Dorsolateral prefrontal cortex (tissue), 120 donors: ENCODE measurements at regions of chr13 and their contacts with region 1.

Region 1: DNA sequence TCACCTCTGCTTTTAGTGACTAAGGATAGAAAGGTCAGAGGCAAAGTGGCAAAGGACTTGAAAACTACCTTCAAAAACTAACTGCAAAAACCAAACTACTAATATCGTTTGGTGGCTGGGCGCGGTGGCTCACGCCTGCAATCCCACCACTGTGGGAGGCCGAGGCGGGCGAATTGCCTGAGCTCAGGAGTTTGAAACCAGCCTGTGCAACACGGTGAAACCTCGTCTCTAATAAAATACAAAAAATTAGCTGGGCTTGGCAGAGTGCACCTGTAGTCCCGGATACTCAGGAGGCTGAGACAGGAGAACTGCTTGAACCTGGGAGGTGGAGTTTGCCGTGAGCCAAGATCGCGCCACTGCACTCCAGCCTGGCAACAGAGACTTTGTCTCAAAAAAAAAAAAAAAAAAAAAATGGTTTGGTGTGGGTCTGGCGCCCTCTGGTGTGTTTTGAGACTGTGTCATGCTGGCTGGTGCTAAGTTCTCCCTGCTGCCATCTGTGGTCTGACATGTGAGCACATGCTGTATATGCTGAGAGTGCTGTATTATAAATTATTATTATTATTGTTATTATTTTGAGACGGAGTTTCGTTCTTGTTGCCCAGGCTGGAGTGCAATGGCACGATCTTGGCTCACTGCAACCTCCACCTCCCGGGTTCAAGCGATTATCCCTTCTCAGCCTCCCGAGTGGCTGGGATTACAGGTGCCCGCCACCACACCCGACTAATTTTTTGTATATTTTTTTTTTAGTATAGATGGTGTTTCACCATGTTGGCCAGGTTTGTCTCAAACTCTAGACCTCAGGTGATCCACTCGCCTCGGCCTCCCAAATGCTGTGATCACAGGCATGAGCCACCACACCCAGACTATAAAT is 36.0 kb upstream of the RNF17 start:
- DNase-seq: peak in 6 of 10 donors; percentile 13 to 70 (median 62)
- H3K4me3 ChIP-seq: peak overlapping the region in 11 of 59 donors; percentile 2 to 40 (median 24)
- H3K27ac ChIP-seq: no peak overlapping the region
- H3K27me3 ChIP-seq: peaks cover 0 to 6% (median 0%) of the 10 kb centered on the region in 45 donors
- CTCF ChIP-seq: peak; percentile 22 to 90 (median 77)

Region 2: GRCh38 chr13:24688950-24689349 is 39.0 kb before region 1 on chr13:
- intact Hi-C with region 1: loop called (anchors 5 kb)
- DNase-seq: no peak
- H3K4me3 ChIP-seq: no peak overlapping the region
- H3K27ac ChIP-seq: no peak overlapping the region
- H3K27me3 ChIP-seq: peaks cover 0 to 22% (median 0%) of the 10 kb centered on the region in 45 donors
- CTCF ChIP-seq: no peak

Region 3: DNA sequence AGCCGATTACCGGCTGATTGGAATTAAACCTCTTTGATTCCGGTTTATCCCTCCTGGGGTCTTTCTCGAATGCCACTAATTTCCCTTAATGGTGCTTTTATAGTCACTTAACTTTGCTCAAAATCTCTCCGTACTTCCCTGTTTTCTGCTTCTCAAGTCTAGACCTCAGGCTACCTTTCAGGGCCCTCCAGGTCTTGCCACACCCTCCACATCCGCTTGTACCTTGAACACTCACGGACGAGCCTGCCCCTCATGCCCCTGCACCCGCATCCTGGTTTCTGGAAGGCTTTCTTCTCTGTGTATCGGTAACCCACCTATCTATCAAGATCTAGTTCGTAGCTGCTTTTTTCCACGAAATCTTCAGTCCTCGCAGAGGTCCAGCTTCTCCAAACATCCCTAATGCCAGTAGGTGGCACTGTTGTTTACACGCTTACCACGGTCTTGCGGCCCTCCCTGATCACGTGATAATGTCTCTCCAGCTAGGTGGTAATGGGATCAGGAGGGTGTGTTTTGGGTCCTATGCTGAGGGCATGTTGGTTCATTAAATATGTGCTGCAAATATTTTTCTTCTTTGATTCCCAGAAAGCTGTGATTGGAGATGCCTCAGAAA is 34.0 kb before region 1 on chr13:
- intact Hi-C with region 1: loop called (anchors 5 kb)
- DNase-seq: peak in 2 of 10 donors; percentile 5 to 34
- H3K4me3 ChIP-seq: no peak overlapping the region
- H3K27ac ChIP-seq: no peak overlapping the region
- H3K27me3 ChIP-seq: peaks cover 0 to 14% (median 0%) of the 10 kb centered on the region in 45 donors
- CTCF ChIP-seq: peak in 54 of 56 donors; percentile 30 to 75 (median 58)